ENCODE measurements at regions of chr7 and their contacts with region 1.

Region 1: GRCh38 chr7:155738652-155739537 is 73.4 kb downstream of the SHH start:
- DNase-seq: no peak
- H3K4me3 ChIP-seq: no peak overlapping the region
- H3K27ac ChIP-seq: no peak overlapping the region
- H3K4me1 ChIP-seq: peaks cover 5% of the 10 kb centered on the region
- H3K27me3 ChIP-seq: no peaks in the 10 kb centered on the region
- CTCF ChIP-seq: peak; percentile 52 to 76 (median 56)

Region 2: GRCh38 chr7:155598810-155599210 is 140.1 kb before region 1 on chr7:
- dilution Hi-C with region 1: loop called (anchors 25 kb)
- DNase-seq: no peak
- H3K4me3 ChIP-seq: no peak overlapping the region
- H3K27ac ChIP-seq: no peak overlapping the region
- H3K4me1 ChIP-seq: no peaks in the 10 kb centered on the region
- H3K27me3 ChIP-seq: peaks cover 28% of the 10 kb centered on the region
- CTCF ChIP-seq: peak; percentile 89 to 98 (median 92)

Region 3: GRCh38 chr7:155796381-155797261 is 57.7 kb after region 1 on chr7:
- dilution Hi-C with region 1: no loop called
- DNase-seq: no peak
- H3K4me3 ChIP-seq: no peak overlapping the region
- H3K27ac ChIP-seq: no peak overlapping the region
- H3K4me1 ChIP-seq: peaks cover 8% of the 10 kb centered on the region
- H3K27me3 ChIP-seq: peaks cover 47% of the 10 kb centered on the region
- CTCF ChIP-seq: peak; percentile 31 to 95 (median 92)